Vagina (tissue), 2 donors: ENCODE measurements at regions of chr7 and their contacts with region 1.

Region 1: DNA sequence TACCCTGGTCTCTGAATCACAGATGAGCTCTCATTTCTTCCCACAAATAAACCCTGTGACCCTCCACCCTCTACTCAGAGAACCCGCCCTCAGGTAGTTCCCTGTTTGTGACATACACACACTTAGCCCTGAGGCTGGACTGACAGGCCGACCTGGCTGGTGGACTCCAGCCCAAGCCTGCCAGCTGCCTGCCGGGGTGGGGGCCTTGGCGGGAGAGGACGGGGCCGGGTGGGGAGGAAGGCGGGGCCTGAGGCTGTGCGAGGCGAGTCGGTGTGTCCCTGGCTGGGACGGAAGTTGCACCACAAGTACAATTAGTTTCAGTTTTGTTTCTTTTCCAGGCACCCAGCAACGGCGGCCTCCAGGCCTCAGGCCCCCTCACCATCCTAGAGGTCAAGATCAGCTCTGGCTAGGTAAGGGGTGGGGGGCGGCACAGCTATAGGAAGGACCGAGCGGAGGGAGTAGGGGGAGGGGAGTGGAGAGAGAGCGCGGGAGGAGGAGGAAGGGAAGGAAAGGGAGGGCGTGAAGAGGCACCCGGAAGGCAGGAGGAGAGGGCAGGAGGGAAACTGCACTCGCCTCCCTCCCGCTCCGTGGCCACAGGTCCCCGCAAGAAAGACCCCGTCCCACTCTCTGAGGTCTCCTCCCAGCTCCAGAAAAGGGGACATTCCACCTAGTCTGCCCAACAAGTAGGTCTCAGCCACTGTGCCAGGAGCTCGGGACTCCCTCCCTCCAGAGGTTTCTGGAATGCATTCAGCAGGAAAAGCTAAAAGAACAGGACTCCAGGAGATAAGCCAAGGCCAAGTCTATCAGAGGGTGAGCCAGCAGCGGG is at the start of gene TRIM56:
- DNase-seq: peak in 1 of 2 donors; percentile 94
- H3K4me3 ChIP-seq: peak within 1 kb of the TSS; percentile 76 to 90
- H3K27ac ChIP-seq: peak within 1 kb of the TSS; percentile 94
- H3K4me1 ChIP-seq: peaks cover 35% of the 10 kb centered on the region
- H3K27me3 ChIP-seq: no peaks in the 10 kb centered on the region
- CTCF ChIP-seq: no peak
- POLR2A ChIP-seq: peak in 1 of 2 donors; percentile 47
- total RNA-seq, gene TRIM56: 19.4 TPM

Region 2: GRCh38 chr7:101126651-101127280 is 41.4 kb after region 1 on chr7 and contains the start of gene SERPINE1:
- intact Hi-C with region 1: loop called (anchors 5 kb)
- DNase-seq: peak in 1 of 2 donors; percentile 99
- H3K4me3 ChIP-seq: peak within 1 kb of the TSS; percentile 14 to 45
- H3K27ac ChIP-seq: peak within 1 kb of the TSS; percentile 81
- H3K4me1 ChIP-seq: peaks cover 54% of the 10 kb centered on the region
- H3K27me3 ChIP-seq: no peaks in the 10 kb centered on the region
- CTCF ChIP-seq: peak in 1 of 3 experiments; percentile 26
- POLR2A ChIP-seq: peak in 1 of 2 donors; percentile 87
- total RNA-seq, gene SERPINE1: 14.7 TPM

Region 3: DNA sequence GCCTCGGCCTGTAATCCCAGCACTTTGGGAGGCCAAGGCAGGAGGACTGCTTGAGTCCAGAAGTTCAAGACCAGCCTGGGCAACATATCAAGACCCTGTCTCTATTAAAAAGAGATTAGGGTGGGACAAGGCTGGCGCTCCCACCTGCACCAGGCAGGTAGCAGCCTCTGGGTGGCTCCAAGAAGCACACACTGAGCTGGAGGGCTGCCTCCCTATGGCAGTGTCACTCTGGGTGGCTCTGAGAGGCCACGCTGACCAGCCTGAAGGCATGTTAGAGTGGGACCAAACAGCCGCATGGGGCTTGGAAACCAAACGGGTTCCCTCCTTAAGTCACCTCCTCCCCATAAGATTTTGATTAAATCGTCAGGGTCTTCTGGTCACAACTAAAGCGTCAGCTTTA is 257.5 kb after region 1 on chr7:
- intact Hi-C with region 1: no loop called
- DNase-seq: no peak
- H3K4me3 ChIP-seq: no peak overlapping the region
- H3K27ac ChIP-seq: no peak overlapping the region
- H3K4me1 ChIP-seq: no peaks in the 10 kb centered on the region
- H3K27me3 ChIP-seq: no peaks in the 10 kb centered on the region
- CTCF ChIP-seq: no peak
- POLR2A ChIP-seq: no peak